MCF 10A (cell line): ENCODE measurements at regions of chr5 and their contacts with region 1.

Region 1: GRCh38 chr5:14650052-14650451 is 14.5 kb upstream of the OTULIN start:
- DNase-seq: no peak
- H3K4me3 Mint-ChIP-seq: no peak overlapping the region
- H3K27ac Mint-ChIP-seq: no peak overlapping the region
- H3K4me1 Mint-ChIP-seq: peaks cover 2% of the 10 kb centered on the region
- H3K27me3 Mint-ChIP-seq: peaks cover 43% of the 10 kb centered on the region
- CTCF ChIP-seq: no peak

Region 2: DNA sequence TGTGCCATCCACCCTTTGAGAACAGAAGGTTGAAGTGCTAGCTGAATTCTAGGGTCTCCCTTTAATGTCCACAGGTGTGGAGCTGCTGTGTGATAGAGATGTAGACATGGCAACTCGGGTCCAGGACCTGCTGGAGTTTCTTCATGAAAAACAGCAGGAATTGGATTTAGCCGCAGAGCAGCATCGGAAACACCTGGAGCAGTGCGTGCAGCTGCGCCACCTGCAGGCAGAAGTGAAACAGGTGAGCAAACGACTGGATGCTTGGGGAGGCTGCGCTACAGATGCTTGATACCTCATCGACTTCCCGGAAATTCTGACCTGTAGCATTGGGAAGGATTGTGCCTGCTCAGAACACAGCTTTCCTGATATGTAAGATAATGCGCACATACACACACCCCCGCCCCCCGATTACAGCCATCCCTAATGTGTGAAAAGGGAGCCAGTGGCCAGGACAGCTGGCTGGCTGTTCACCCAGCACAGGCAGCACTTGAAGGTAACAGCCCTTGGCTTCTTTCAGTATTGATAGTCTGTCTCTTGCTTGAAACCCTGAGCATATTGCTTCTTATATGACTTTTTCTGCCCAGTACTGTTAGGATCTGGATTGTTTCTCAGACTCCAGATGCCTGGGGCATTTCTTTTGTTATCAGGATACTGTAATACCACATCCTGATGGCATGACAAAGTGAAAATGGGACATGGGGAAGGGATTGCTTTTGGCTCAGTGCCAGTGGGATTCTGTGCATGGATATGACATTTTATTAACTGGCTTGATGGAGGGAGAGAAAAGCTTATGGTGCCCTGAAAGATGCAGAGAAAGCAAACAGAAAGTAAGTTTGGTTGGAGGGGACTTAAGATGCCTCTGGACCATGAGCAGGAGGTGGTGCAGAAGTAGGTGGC is 285.2 kb before region 1 on chr5:
- CTCF ChIA-PET with region 1: interaction called, 56 read pairs
- POLR2A ChIA-PET with region 1: no interaction called
- intact Hi-C with region 1: no loop called
- DNase-seq: peak; percentile 53
- H3K4me3 Mint-ChIP-seq: no peak overlapping the region
- H3K27ac Mint-ChIP-seq: no peak overlapping the region
- H3K4me1 Mint-ChIP-seq: no peaks in the 10 kb centered on the region
- H3K27me3 Mint-ChIP-seq: no peaks in the 10 kb centered on the region
- CTCF ChIP-seq: peak; percentile 50

Region 3: GRCh38 chr5:14417276-14417730 is 232.7 kb before region 1 on chr5:
- CTCF ChIA-PET with region 1: interaction called, 18 read pairs
- POLR2A ChIA-PET with region 1: no interaction called
- intact Hi-C with region 1: no loop called
- DNase-seq: no peak
- H3K4me3 Mint-ChIP-seq: no peak overlapping the region
- H3K27ac Mint-ChIP-seq: peak overlapping the region; percentile 17
- H3K4me1 Mint-ChIP-seq: no peaks in the 10 kb centered on the region
- H3K27me3 Mint-ChIP-seq: no peaks in the 10 kb centered on the region
- CTCF ChIP-seq: no peak

Region 4: DNA sequence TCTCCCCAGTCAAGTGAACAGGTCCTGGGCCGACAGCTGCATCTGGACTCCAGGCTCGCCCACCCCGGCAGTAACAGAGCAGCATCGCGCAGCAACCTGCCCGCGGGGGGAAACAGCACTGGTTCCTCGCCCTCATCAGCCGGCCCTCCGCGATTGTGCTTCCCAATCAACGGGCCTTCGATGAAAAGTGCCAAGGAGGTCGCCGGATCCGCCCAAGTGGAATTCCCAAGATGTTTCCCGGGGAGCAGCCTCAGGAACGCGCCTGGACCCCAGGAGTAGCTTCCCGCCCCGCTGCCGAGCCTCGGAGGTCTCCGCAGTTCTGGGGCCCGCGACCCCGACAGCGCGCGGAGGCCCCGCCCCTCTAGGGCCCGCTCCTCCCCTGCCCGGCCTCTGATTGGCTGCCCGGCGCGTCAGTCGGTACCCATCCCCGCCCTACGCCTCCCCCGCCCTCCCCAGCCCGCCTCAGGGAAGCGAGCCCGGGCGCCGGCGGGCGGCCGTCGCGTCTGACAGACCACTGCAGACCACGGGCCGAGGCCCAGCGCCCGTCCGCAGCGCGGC is 68.6 kb before region 1 on chr5 and contains the start of gene OTULINL:
- CTCF ChIA-PET with region 1: interaction called, 11 read pairs
- POLR2A ChIA-PET with region 1: interaction called, 3 read pairs
- intact Hi-C with region 1: no loop called
- DNase-seq: peak; percentile 70
- H3K4me3 Mint-ChIP-seq: peak within 1 kb of the TSS; percentile 58
- H3K27ac Mint-ChIP-seq: no peak within 1 kb of the TSS
- H3K4me1 Mint-ChIP-seq: peaks cover 10% of the 10 kb centered on the region
- H3K27me3 Mint-ChIP-seq: peaks cover 30% of the 10 kb centered on the region
- CTCF ChIP-seq: no peak
- total RNA-seq, gene OTULINL: not detected in 2 replicates

Region 5: DNA sequence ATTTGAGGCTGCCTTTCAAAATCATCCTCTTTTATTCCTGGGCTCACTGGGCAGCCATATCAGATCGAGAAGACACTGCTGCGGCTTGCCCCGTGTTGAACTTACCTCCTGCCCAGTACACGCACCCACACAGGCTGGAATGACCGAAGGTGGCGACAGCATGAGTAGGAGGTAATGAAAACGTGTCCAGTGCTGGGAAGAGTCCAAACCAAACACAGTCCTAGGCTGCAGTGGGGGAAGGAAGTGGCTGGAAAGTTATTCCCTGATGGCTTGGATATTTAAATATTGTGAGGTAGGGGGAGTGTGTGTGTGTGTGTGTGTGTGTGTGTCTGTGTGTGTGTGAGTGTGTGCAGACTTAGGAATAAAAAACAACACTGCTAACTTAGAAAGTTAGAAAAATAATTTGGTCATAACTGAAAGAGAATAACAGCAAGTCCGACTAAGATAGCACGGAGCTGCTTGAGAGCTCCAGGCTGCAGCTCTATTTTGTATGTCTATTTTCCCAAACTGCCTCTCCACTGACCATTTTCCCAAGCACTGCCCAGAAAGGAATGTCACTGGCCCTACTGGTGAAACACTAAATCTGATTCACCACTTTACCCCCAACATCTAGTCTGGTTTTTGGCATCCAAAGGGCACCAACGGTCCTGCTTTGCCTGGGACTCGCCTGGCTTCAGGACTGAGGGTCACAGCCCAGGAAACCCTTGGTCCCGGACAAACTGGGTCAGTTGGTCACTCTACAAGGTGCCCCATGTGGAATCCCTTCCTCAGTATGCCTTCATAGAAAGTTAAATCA is 180.4 kb after region 1 on chr5:
- CTCF ChIA-PET with region 1: no interaction called
- POLR2A ChIA-PET with region 1: no interaction called
- intact Hi-C with region 1: no loop called
- DNase-seq: peak; percentile 68
- H3K4me3 Mint-ChIP-seq: peak overlapping the region; percentile 32
- H3K27ac Mint-ChIP-seq: peak overlapping the region; percentile 78
- H3K4me1 Mint-ChIP-seq: peaks cover 16% of the 10 kb centered on the region
- H3K27me3 Mint-ChIP-seq: no peaks in the 10 kb centered on the region
- CTCF ChIP-seq: no peak